Heart right ventricle (tissue), 16 donors: ENCODE measurements at regions of chr17 and their contacts with region 1.

Region 1: GRCh38 chr17:68457539-68458259 is 403 bp upstream of the WIPI1 start:
- DNase-seq: peak; percentile 98 to 99
- ATAC-seq: peak; percentile 87 to 94 (median 91)
- H3K4me3 ChIP-seq: peak overlapping the region; percentile 29 to 95 (median 88)
- H3K27ac ChIP-seq: peak overlapping the region; percentile 85 to 99 (median 95)
- H3K4me1 ChIP-seq: peaks cover 0 to 83% (median 63%) of the 10 kb centered on the region in 9 donors
- H3K27me3 ChIP-seq: no peaks in the 10 kb centered on the region
- CTCF ChIP-seq: peak in 2 of 9 donors; percentile 3 to 5

Region 2: DNA sequence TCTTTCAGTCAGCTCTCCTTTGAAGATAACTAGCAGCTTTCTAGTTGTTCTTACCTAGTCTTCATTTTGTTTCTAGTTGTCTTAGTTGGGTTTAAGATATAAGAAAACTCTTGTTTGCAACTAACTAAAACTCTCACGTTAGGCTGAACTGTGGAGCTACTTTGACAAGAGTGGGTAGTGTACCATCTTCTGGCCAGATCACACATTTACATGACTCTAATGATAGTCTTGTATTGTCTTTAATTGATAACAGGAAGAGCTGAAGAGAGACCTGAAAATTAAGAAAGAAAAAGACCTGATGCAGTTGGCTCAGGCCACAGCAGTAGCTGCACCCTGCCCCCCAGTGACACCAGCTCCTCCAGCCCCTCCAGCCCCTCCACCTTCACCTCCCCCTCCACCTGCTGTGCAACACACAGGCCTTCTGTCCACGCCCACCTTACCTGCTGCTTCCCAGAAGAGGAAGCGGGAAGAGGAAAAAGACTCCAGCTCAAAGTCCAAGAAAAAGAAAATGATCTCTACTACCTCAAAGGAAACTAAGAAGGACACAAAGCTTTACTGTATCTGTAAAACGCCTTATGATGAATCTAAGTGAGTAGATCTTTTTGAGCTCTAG is 498.3 kb before region 1 on chr17:
- intact Hi-C with region 1: loop called in 1 of 10 experiments (anchors 10 kb)
- DNase-seq: no peak
- ATAC-seq: no peak
- H3K4me3 ChIP-seq: no peak overlapping the region
- H3K27ac ChIP-seq: peak overlapping the region in 1 of 10 donors; percentile 52
- H3K4me1 ChIP-seq: peaks cover 0 to 2% (median 0%) of the 10 kb centered on the region in 9 donors
- H3K27me3 ChIP-seq: no peaks in the 10 kb centered on the region
- CTCF ChIP-seq: no peak

Region 3: GRCh38 chr17:68205251-68205807 is 252.4 kb before region 1 on chr17:
- intact Hi-C with region 1: loop called in 1 of 10 experiments (anchors 10 kb)
- DNase-seq: peak; percentile 90 to 95
- ATAC-seq: peak; percentile 91 to 95 (median 94)
- H3K4me3 ChIP-seq: peak overlapping the region; percentile 54 to 92 (median 82)
- H3K27ac ChIP-seq: peak overlapping the region; percentile 85 to 93 (median 90)
- H3K4me1 ChIP-seq: peaks cover 0 to 35% (median 18%) of the 10 kb centered on the region in 9 donors
- H3K27me3 ChIP-seq: peaks cover 0 to 17% (median under 1%) of the 10 kb centered on the region in 7 donors
- CTCF ChIP-seq: peak; percentile 79 to 98 (median 96)

Region 4: GRCh38 chr17:68260051-68260762 is 197.5 kb before region 1 on chr17:
- intact Hi-C with region 1: loop called in 6 of 10 experiments (anchors 2 to 10 kb)
- DNase-seq: no peak
- ATAC-seq: no peak
- H3K4me3 ChIP-seq: no peak overlapping the region
- H3K27ac ChIP-seq: peak overlapping the region in 1 of 10 donors; percentile 71
- H3K4me1 ChIP-seq: peaks cover 0 to 62% (median 14%) of the 10 kb centered on the region in 9 donors
- H3K27me3 ChIP-seq: no peaks in the 10 kb centered on the region
- CTCF ChIP-seq: no peak

Region 5: DNA sequence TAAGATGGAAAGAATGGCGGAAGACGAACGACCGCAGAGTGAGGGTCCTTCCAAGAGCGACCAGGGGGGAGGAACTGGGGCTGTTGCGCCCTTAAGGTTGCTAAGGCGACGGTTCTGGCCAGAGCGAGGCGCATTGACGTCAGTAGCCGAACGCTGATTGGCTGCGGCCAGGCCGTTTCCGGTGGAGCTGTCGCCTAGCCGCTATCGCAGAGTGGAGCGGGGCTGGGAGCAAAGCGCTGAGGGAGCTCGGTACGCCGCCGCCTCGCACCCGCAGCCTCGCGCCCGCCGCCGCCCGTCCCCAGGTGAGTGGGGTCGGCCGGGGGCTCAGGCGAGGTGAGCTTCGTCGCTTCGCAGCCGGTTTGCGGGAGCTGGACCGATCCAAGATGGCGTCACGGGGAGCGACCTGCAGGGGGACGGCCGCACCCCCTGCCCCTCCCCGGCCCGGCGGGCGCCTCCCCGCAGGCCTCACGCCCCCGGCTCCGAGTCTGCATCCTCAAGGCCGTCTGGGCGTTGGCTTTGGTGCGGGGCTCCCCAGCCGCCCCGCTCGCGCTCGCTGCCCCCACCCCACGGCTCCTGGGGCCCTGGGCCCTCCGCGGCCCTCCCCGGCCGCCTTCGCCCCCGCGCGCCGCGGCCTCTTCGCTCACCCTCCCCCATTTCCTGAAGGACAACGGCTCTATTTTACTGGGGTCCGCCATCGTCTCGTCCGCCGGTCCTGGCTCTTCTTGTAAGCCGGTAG is 54.7 kb after region 1 on chr17 and contains the start of gene PRKAR1A:
- intact Hi-C with region 1: loop called in 2 of 10 experiments (anchors 2 to 5 kb)
- DNase-seq: peak; percentile 94 to 96
- ATAC-seq: peak; percentile 91 to 96 (median 94)
- H3K4me3 ChIP-seq: peak within 1 kb of the TSS; percentile 65 to 90 (median 84)
- H3K27ac ChIP-seq: peak within 1 kb of the TSS; percentile 94 to 100 (median 99)
- H3K4me1 ChIP-seq: peaks cover 5 to 78% (median 55%) of the 10 kb centered on the region in 9 donors
- H3K27me3 ChIP-seq: no peaks in the 10 kb centered on the region
- CTCF ChIP-seq: peak in 3 of 9 donors; percentile 4 to 25 (median 11)
- total RNA-seq, gene PRKAR1A: 609 to 1,378 (median 974) TPM

Region 6: GRCh38 chr17:68613739-68614298 is 156.1 kb after region 1 on chr17:
- intact Hi-C with region 1: loop called in 1 of 10 experiments (anchors 5 kb)
- DNase-seq: peak in 1 of 2 donors; percentile 71
- ATAC-seq: peak in 5 of 8 donors; percentile 52 to 77 (median 70)
- H3K4me3 ChIP-seq: no peak overlapping the region
- H3K27ac ChIP-seq: no peak overlapping the region
- H3K4me1 ChIP-seq: no peaks in the 10 kb centered on the region
- H3K27me3 ChIP-seq: no peaks in the 10 kb centered on the region
- CTCF ChIP-seq: peak in 8 of 9 donors; percentile 46 to 76 (median 70)